AG04450 (cell line): ENCODE measurements at regions of chr3 and their contacts with region 1.

Region 1: GRCh38 chr3:126971891-126972351 is 11.0 kb upstream of the PLXNA1 start:
- DNase-seq: no peak
- H3K4me3 ChIP-seq: no peak overlapping the region
- H3K27ac ChIP-seq: no peak overlapping the region
- H3K27me3 ChIP-seq: peaks cover 6% of the 10 kb centered on the region
- CTCF ChIP-seq: no peak

Region 2: DNA sequence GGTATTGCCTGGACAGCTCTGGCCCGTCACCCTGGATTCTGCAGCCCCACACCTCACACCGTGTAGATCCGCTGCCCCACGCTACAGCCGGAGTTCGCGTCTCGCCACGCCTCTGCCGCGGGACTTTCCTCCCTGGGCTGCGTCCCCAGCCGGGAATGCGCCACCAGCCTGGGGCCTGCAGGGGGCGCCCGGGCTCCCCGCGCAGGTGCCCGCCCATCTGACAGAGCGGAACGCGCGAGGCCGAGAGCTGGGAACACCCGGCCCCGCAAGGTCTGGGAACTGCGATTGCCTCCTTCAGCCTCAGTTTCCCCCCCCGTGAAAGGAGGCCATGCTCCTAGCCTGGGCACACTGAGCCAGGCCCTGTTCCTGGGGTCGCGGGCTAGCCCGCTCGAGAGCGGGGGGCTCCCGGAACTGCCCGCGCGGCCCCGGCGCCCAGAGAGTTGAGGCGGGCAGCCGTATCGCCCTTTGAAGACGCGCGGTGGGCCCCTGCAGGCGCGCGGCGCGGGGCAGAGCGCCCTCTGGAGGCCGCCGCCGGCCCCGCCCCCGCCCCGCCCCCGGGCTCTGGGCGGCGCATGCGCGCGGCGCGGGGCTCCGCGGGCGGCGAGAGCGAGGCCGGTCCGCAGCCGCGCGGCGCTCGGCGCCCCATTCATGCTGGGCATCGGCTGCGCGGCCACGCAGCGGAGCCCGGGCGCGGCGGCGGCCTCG is 10.7 kb after region 1 on chr3 and contains the start of gene PLXNA1:
- CTCF ChIA-PET with region 1: interaction called, 37 read pairs
- POLR2A ChIA-PET with region 1: no interaction called
- DNase-seq: peak; percentile 23
- H3K4me3 ChIP-seq: peak within 1 kb of the TSS; percentile 70
- H3K27ac ChIP-seq: peak within 1 kb of the TSS; percentile 39
- H3K27me3 ChIP-seq: peaks cover 7% of the 10 kb centered on the region
- CTCF ChIP-seq: peak; percentile 85
- polyA plus RNA-seq, gene PLXNA1: 22.0 and 30.8 TPM in 2 replicates